Activated CD4-positive, alpha-beta memory T cell treated with anti-CD3 and anti-CD28 coated beads for 36 hours (primary cell): ENCODE measurements at regions of chr17 and their contacts with region 1.

Region 1: DNA sequence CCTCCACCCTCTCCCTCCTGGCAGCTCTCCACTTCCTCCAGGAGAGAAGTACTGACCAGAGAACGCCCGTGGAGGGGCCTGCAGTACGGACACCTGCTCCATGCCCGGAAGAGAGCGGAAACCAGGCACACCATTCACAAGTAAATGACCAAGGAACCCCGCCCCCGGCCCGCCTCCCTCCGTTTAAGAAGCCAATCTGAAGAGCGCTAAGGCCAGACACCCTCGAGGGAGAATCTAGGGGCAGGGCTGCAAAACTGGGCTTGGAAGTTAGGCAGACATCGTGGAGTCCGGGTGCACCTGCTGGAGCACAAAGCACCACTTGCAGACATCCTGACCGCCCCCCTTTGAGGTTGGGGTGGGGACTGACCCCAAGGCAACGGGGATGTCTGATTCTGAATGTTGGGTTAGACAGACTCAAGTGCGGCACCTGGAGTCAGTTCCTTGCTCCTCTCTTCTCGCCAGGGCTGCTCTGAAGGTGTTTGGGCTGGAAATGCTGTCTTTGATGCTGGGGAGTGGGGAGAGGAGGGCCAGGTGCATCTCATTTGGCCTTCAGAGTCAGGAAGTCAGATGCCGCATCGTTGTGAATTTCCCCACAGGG is 964 bp upstream of the FAAP100 start:
- DNase-seq: peak; percentile 88
- H3K4me3 Mint-ChIP-seq: peak overlapping the region; percentile 86
- H3K27ac Mint-ChIP-seq: peak overlapping the region; percentile 88
- H3K4me1 Mint-ChIP-seq: peaks cover 33% of the 10 kb centered on the region
- H3K27me3 Mint-ChIP-seq: no peaks in the 10 kb centered on the region

Region 2: GRCh38 chr17:81512560-81513371 is 40.4 kb before region 1 on chr17 and contains the start of gene ACTG1:
- CTCF ChIA-PET with region 1: interaction called, 4 read pairs
- POLR2A ChIA-PET with region 1: interaction called, 14 read pairs
- intact Hi-C with region 1: loop called (anchors 2 kb)
- DNase-seq: peak; percentile 93
- H3K4me3 Mint-ChIP-seq: peak within 1 kb of the TSS; percentile 89
- H3K27ac Mint-ChIP-seq: peak within 1 kb of the TSS; percentile 92
- H3K4me1 Mint-ChIP-seq: peaks cover 30% of the 10 kb centered on the region
- H3K27me3 Mint-ChIP-seq: no peaks in the 10 kb centered on the region
- total RNA-seq, gene ACTG1: 3,773 to 3,928 TPM